OCI-LY7 (cell line): ENCODE measurements at regions of chrX and their contacts with region 1.

Region 1: DNA sequence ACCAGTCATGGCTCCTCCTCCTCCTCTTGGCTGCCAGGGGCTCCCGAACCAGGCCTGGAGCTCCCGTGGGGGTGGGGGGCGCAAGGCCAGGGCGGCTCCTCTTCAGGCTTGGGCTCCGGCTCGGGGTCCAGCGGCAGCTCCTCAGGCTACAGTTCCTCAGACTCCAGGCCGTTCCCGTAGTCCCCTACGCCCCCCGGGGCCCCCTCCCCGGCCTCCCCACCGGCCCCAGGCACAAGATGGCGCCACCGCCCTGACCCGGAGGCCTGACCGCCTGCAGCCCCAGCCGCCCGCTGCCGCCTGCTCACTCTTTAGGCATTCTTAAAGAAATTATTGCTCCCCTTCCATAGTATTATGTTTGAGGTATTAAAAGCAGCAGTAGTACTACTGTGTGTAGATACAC is 54.5 kb downstream of the TAF1 start:
- DNase-seq: no peak
- H3K4me3 ChIP-seq: no peak overlapping the region
- H3K27ac ChIP-seq: no peak overlapping the region
- H3K4me1 ChIP-seq: no peaks in the 10 kb centered on the region
- CTCF ChIP-seq: 0 out of 2 replicates have a peak, but pooled peaks have one; percentile 20

Region 2: DNA sequence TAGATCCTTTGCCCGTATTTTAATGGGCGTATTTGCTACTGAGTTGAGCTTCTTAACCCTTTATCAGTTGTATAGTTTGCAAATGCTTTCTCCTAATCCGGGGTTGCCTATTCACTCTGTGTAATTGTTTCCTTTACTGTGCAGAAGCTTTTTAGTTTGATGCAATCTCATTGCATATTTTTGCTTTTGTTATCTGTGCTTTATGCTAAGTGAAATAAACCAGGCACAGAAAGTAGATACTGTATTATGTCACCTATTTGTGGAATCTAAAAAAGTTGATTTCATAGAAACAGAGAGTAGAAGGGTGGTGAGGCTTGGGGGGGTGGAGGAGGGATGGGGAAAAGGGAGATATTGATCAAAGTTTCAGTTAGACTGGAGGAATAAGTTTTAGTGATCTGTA is 129.9 kb after region 1 on chrX:
- CTCF ChIA-PET with region 1: no interaction called
- POLR2A ChIA-PET with region 1: no interaction called
- intact Hi-C with region 1: loop called (anchors 10 kb)
- DNase-seq: no peak
- H3K4me3 ChIP-seq: no peak overlapping the region
- H3K27ac ChIP-seq: no peak overlapping the region
- H3K4me1 ChIP-seq: no peaks in the 10 kb centered on the region
- CTCF ChIP-seq: no peak

Region 3: GRCh38 chrX:71895607-71896006 is 474.9 kb after region 1 on chrX:
- CTCF ChIA-PET with region 1: no interaction called
- POLR2A ChIA-PET with region 1: interaction called, 12 read pairs
- intact Hi-C with region 1: no loop called
- DNase-seq: no peak
- H3K4me3 ChIP-seq: no peak overlapping the region
- H3K27ac ChIP-seq: no peak overlapping the region
- H3K4me1 ChIP-seq: no peaks in the 10 kb centered on the region
- CTCF ChIP-seq: no peak

Region 4: GRCh38 chrX:72566448-72566847 is 1145.8 kb after region 1 on chrX:
- CTCF ChIA-PET with region 1: no interaction called
- POLR2A ChIA-PET with region 1: no interaction called
- intact Hi-C with region 1: no loop called
- DNase-seq: no peak
- H3K4me3 ChIP-seq: no peak overlapping the region
- H3K27ac ChIP-seq: no peak overlapping the region
- H3K4me1 ChIP-seq: no peaks in the 10 kb centered on the region
- CTCF ChIP-seq: no peak